Ascending aorta (tissue), 2 donors: ENCODE measurements at regions of chr18 and their contacts with region 1.

Region 1: DNA sequence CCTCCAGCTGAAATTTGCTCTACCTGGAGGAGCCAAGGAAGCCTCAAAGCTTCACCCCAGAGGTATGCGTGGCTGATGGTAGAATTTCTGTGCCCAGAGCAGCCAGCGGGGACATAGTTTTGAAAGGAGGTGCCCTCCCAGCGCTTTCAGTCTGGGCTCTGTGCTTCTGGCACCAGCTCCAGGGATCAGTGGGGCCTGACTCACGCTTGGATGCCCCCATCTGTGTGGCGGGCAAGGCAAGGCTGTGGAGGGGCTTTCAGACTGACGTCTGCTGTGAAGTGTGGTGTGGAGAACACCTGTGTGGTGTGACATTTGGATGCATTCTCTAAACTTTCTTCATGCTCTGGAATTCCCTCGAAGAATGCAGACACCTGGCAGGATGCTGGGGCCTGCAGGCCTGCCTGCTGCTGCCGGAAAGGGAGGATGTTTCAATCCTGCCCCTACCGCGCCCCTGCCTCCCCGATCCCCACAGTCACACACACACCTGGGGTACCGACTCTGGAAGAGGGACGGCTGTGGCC is 84.1 kb downstream of the CTIF start:
- DNase-seq: peak in 1 of 2 donors; percentile 74
- H3K4me3 ChIP-seq: no peak overlapping the region
- H3K27ac ChIP-seq: peak overlapping the region; percentile 73 to 78
- H3K4me1 ChIP-seq: peaks cover 9 to 27% of the 10 kb centered on the region in 2 donors
- H3K27me3 ChIP-seq: no peaks in the 10 kb centered on the region
- CTCF ChIP-seq: no peak

Region 2: DNA sequence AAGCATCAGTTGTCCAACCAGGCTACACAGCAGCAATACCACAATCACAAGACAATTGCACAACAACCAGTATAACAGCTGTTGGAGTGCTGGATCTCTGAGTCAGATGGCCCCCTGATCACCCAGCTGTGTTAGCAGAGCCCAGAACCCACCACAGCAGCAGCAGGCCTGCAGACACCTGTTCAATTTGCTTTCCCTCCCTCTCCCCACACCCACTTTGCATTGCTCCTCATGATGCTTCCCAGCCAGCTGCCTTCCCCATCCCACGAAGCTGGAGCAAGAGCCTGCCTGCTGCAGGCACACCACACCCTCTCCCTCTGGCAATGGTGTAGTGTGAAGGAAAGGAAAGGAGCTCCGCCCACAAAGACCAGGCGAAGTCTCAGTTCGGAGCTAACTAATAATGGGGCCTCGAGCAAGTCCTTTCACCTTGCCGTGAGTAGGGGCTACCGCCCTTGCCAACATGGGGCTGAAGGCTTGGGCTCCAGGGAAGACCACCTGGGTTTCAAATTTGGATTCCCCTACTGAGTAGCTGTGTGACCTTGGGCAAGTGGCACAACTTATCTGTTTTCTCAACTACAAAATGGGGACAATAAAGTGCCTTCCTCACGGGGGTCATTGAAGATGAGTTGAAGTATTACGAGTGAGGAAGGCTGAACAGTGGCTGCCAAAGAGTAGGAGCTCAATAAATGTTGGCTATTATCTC is 194.3 kb before region 1 on chr18:
- intact Hi-C with region 1: no loop called
- DNase-seq: no peak
- H3K4me3 ChIP-seq: no peak overlapping the region
- H3K27ac ChIP-seq: no peak overlapping the region
- H3K4me1 ChIP-seq: no peaks in the 10 kb centered on the region
- H3K27me3 ChIP-seq: no peaks in the 10 kb centered on the region
- CTCF ChIP-seq: no peak

Region 3: GRCh38 chr18:48488388-48488850 is 134.6 kb before region 1 on chr18:
- intact Hi-C with region 1: loop called (anchors 5 kb)
- DNase-seq: peak in 1 of 2 donors; percentile 91
- H3K4me3 ChIP-seq: no peak overlapping the region
- H3K27ac ChIP-seq: no peak overlapping the region
- H3K4me1 ChIP-seq: peaks cover 3 to 17% of the 10 kb centered on the region in 2 donors
- H3K27me3 ChIP-seq: no peaks in the 10 kb centered on the region
- CTCF ChIP-seq: no peak

Region 4: DNA sequence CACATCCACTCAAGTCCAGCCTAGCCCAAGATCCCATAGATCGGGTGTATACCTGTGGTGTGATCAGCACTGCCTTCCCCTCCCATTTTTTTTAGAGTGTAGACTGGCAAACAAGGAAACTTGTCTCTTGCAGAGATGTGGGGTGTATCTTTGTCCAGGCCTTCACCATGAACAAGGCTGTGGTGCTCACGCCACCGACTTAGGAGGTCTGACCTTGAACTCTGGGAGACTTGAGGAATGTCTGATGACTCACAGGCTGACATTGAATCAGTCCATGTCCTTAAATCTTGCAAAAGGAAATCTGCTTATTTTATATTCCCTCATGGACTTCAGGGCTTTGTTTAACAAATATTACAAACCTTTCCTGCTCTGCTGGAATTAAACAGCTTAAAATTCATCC is 88.6 kb before region 1 on chr18:
- intact Hi-C with region 1: no loop called
- DNase-seq: no peak
- H3K4me3 ChIP-seq: no peak overlapping the region
- H3K27ac ChIP-seq: no peak overlapping the region
- H3K4me1 ChIP-seq: no peaks in the 10 kb centered on the region
- H3K27me3 ChIP-seq: no peaks in the 10 kb centered on the region
- CTCF ChIP-seq: no peak

Region 5: GRCh38 chr18:48563043-48563442 is 59.9 kb before region 1 on chr18:
- intact Hi-C with region 1: loop called (anchors 5 kb)
- DNase-seq: no peak
- H3K4me3 ChIP-seq: no peak overlapping the region
- H3K27ac ChIP-seq: peak overlapping the region in 1 of 2 donors; percentile 43
- H3K4me1 ChIP-seq: peaks cover 0 to 21% of the 10 kb centered on the region in 2 donors
- H3K27me3 ChIP-seq: no peaks in the 10 kb centered on the region
- CTCF ChIP-seq: no peak

Region 6: DNA sequence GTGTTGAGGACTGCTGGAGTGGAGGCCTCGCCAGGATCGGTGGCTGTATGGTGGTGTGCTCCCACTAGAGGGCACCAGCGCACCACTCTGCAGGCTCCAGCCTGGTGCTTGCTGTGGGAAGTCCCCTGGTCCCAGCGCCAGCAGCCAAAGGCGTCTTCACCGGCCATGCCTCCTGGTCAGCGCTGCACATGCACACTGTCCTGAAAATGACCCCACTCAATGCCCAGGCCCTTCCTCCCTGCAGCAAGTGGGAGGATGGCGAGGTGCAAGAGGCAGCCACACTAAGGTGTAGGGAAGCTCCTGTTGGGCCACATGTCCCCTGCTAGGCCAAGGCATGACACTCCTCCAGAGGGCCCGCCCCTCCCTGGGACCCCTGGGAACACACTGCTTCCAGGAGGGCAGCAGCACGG is 52.4 kb after region 1 on chr18:
- intact Hi-C with region 1: no loop called
- DNase-seq: peak; percentile 47 to 91
- H3K4me3 ChIP-seq: no peak overlapping the region
- H3K27ac ChIP-seq: peak overlapping the region in 1 of 2 donors; percentile 84
- H3K4me1 ChIP-seq: peaks cover 18 to 33% of the 10 kb centered on the region in 2 donors
- H3K27me3 ChIP-seq: no peaks in the 10 kb centered on the region
- CTCF ChIP-seq: peak; percentile 92 to 95 (median 94)